Aorta (tissue), 5 donors: ENCODE measurements at regions of chr4 and their contacts with region 1.

Region 1: GRCh38 chr4:120277391-120277790 is 210.7 kb upstream of the MAD2L1 start:
- DNase-seq: no peak
- ATAC-seq: no peak
- H3K4me3 ChIP-seq: no peak overlapping the region
- H3K27ac ChIP-seq: no peak overlapping the region
- H3K4me1 ChIP-seq: no peaks in the 10 kb centered on the region
- H3K27me3 ChIP-seq: no peaks in the 10 kb centered on the region

Region 2: DNA sequence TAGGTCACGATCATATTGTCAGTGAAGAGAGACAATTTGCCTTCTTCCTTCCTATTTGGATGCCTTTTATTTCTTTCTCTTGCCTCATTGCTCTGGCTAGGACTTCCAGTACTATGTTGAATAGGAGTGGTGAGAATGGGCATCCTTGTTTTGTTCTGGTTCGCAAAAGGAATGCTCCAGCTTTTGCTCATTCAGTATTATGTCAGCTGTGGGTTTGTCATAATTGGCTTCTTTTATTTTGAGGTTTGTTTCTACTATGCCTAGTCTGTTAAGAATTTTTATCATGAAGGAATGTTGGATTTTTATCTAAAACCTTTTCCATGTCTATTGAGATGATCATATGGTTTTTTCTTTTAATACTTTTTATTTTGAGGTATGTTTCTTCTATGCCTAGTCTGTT is 58.4 kb before region 1 on chr4:
- intact Hi-C with region 1: loop called in 1 of 2 experiments (anchors 10 kb)
- DNase-seq: no peak
- ATAC-seq: no peak
- H3K4me3 ChIP-seq: no peak overlapping the region
- H3K27ac ChIP-seq: no peak overlapping the region
- H3K4me1 ChIP-seq: no peaks in the 10 kb centered on the region
- H3K27me3 ChIP-seq: no peaks in the 10 kb centered on the region